ENCODE measurements at regions of chr4 and their contacts with region 1.

Region 1: DNA sequence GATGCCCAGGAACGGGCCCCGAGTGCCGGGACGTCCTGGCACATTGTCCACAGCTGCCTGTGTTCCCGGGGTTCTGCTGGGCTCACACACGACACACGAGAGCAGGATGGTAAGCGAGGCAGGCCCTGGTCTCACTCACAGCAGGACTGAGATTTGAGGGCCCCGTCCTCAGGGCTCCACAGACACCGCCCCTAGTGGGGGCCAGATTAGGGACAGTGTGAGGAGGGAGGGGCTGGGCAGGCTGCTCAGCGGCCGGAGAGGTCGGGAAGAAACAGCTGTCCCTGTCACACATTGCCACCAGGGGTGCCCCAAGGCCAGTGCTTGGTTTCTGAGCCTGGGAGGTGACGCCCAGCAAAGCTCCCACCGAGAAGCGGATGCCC is 29.0 kb downstream of the NKX1-1 start:
- DNase-seq: peak in 1 of 2 donors; percentile 48
- H3K4me3 ChIP-seq: no peak overlapping the region
- H3K27ac ChIP-seq: no peak overlapping the region
- H3K4me1 ChIP-seq: no peaks in the 10 kb centered on the region
- H3K27me3 ChIP-seq: no peaks in the 10 kb centered on the region
- CTCF ChIP-seq: no peak
- POLR2A ChIP-seq: no peak

Region 2: DNA sequence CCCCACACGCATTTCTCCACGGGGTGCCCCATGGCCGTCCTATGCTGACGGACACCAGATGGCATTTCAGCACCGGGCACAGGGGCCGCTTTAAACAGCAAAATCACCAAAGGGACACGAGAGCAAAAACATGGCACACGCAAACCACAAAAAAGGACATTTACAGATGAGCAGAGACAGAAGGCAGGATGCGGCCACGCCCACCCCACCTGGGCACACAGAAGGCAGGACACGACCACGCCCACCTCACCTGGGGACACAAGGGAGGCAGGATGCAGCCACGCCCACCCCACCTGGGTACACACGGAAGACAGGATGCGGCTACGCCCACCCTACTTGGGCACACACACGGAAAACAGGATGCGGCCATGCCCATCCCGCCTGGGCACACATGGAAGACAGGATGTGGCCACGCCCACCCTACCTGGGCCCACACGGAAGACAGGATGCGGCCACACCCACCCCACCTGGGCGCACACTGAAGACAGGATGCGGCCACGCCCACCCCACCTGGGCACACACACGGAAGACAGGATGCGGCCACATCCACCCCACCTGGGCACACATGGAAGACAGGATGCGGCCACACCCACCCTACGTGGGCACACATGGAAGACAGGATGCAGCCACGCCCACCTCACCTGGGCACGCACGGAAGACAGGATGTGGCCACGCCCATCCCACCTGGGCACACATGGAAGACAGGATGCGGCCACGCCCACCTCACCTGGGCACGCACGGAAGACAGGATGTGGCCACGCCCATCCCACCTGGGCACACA is 237.8 kb after region 1 on chr4:
- intact Hi-C with region 1: no loop called
- DNase-seq: no peak
- H3K4me3 ChIP-seq: no peak overlapping the region
- H3K27ac ChIP-seq: no peak overlapping the region
- H3K4me1 ChIP-seq: no peaks in the 10 kb centered on the region
- H3K27me3 ChIP-seq: no peaks in the 10 kb centered on the region
- CTCF ChIP-seq: no peak
- POLR2A ChIP-seq: no peak

Region 3: DNA sequence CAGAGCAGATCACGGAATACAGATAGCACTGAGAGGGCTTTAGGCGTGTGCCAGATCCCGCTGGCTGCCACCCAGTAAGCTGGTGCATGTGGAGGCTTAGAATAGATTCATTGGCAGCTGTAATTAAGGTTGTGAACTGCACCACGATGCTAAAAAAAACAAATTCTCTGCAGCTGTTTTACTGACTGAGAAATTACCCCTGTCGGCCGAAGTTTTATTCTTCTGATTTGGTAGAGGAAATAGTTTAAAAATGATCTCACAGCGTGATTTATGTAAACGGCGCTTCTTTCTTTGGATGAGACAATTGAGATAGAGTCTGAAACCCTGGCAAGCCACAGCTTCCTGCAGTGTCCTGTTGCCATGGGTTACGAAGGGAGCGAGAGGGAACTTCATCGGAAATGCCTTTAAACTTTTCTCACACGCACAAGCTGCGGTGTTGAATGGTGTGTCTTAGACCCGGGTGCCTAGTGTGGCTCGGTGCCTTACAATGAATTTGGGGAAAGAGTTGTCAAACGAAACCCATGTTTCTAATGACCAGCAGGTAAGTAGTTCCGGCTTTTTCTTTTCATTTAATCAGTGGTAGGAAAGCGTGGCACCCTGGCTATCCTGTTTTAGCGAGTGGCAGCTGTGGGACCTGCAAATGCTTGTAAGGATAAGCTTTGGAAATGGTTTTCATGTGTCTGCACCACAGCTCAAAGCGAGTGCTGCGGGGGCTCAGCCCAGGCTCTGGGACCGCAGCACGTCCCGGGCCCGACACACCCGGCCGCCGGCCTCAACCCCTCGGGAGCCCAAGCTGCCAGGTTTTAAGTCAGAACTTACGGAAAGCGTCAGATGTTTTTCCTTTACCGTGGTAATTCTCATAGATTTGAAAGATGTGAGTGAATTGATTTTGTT is 1992.8 kb after region 1 on chr4:
- intact Hi-C with region 1: loop called (anchors 5 kb)
- DNase-seq: no peak
- H3K4me3 ChIP-seq: peak overlapping the region; percentile 9 to 46 (median 14)
- H3K27ac ChIP-seq: no peak overlapping the region
- H3K4me1 ChIP-seq: peaks cover 6 to 15% of the 10 kb centered on the region in 2 donors
- H3K27me3 ChIP-seq: no peaks in the 10 kb centered on the region
- CTCF ChIP-seq: no peak
- POLR2A ChIP-seq: no peak